Activated CD8-positive, alpha-beta T cell treated with anti-CD3 and anti-CD28 coated beads for 36 hours (primary cell): ENCODE measurements at regions of chr9 and their contacts with region 1.

Region 1: DNA sequence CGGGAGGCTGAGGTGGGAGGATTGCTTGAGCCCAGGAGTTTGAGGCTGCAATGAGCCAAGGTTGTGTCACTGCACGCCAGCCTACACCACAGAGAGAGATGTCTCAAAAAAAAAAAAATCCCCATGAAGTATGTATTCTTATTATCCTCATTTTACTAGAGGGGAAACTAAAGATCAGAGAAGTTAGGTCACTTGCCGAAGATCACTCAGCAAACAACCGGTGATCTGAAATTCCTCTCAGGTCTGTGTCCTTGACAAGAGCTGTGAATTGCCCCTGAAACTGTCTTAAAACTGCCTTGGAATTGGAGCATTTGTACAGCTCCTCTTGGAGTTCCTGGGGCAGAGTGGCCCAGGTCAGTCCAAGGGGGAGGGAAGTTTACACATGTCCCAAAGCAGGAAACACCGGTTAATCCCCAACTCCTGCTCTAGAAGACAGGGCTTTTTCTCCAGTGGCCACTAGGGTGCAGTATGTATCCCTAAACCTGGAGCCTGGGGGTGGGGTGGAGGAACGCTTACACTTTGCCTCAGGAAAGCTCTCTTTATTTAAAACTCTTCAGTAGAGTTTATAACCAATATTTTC is 27.6 kb downstream of the AQP7 start:
- DNase-seq: peak; percentile 84
- ATAC-seq: peak; percentile 97
- H3K4me3 Mint-ChIP-seq: no peak overlapping the region
- H3K27ac Mint-ChIP-seq: no peak overlapping the region
- H3K4me1 Mint-ChIP-seq: peaks cover 4% of the 10 kb centered on the region
- H3K27me3 Mint-ChIP-seq: no peaks in the 10 kb centered on the region
- CTCF ChIP-seq: peak; percentile 92

Region 2: GRCh38 chr9:33159760-33160127 is 215.0 kb before region 1 on chr9:
- CTCF ChIA-PET with region 1: no interaction called
- POLR2A ChIA-PET with region 1: no interaction called
- intact Hi-C with region 1: no loop called
- DNase-seq: peak; percentile 85
- ATAC-seq: peak; percentile 66
- H3K4me3 Mint-ChIP-seq: peak overlapping the region; percentile 54
- H3K27ac Mint-ChIP-seq: peak overlapping the region; percentile 90
- H3K4me1 Mint-ChIP-seq: peaks cover 93% of the 10 kb centered on the region
- H3K27me3 Mint-ChIP-seq: no peaks in the 10 kb centered on the region
- CTCF ChIP-seq: no peak

Region 3: GRCh38 chr9:33233681-33234473 is 140.8 kb before region 1 on chr9:
- CTCF ChIA-PET with region 1: no interaction called
- POLR2A ChIA-PET with region 1: no interaction called
- intact Hi-C with region 1: no loop called
- DNase-seq: peak; percentile 20
- ATAC-seq: no peak
- H3K4me3 Mint-ChIP-seq: no peak overlapping the region
- H3K27ac Mint-ChIP-seq: no peak overlapping the region
- H3K4me1 Mint-ChIP-seq: no peaks in the 10 kb centered on the region
- H3K27me3 Mint-ChIP-seq: no peaks in the 10 kb centered on the region
- CTCF ChIP-seq: no peak

Region 4: GRCh38 chr9:33249087-33249657 is 125.6 kb before region 1 on chr9:
- CTCF ChIA-PET with region 1: no interaction called
- POLR2A ChIA-PET with region 1: no interaction called
- intact Hi-C with region 1: no loop called
- DNase-seq: no peak
- ATAC-seq: no peak
- H3K4me3 Mint-ChIP-seq: no peak overlapping the region
- H3K27ac Mint-ChIP-seq: no peak overlapping the region
- H3K4me1 Mint-ChIP-seq: no peaks in the 10 kb centered on the region
- H3K27me3 Mint-ChIP-seq: no peaks in the 10 kb centered on the region
- CTCF ChIP-seq: no peak

Region 5: DNA sequence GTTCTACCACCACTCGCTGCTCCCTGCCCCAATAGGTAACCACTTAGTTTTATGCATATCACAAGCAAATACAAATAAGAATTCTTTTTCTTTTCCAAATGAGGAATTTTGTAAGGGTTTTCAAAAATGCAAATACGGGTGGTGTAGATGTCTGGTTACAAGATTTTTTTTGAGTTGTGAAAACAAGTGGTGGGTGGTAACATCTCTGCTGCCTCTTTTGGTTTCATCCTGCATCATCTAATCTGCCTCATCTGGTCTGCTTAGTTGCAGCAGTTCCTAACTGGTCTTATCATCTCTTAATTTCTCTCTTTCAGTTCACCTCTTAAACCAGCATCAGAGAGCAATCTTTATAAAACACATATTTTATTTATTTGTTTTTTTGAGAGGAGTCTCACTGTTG is 79.2 kb before region 1 on chr9:
- CTCF ChIA-PET with region 1: no interaction called
- POLR2A ChIA-PET with region 1: no interaction called
- intact Hi-C with region 1: no loop called
- DNase-seq: peak; percentile 14
- ATAC-seq: peak; percentile 45
- H3K4me3 Mint-ChIP-seq: peak overlapping the region; percentile 44
- H3K27ac Mint-ChIP-seq: peak overlapping the region; percentile 87
- H3K4me1 Mint-ChIP-seq: peaks cover 80% of the 10 kb centered on the region
- H3K27me3 Mint-ChIP-seq: no peaks in the 10 kb centered on the region
- CTCF ChIP-seq: no peak

Region 6: DNA sequence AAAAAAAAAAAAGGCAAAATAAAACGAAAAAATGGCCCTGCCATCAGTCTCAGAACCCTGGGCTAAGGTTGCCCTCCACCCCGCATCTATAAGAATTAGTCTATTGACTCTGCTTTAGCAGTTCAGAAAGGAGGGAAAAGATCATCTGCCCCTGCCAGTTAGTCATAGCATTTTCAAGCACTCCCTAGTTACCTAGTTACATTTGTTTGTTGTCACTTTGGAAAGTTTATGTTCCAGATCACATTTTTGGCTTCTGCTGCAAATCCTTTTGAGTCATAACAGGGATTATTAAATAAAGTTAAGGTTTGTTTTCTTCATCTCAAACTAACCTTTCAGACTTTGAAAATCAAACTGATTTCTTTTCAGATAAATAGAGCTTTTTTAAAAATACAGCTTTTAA is 24.4 kb before region 1 on chr9:
- CTCF ChIA-PET with region 1: interaction called, 14 read pairs
- POLR2A ChIA-PET with region 1: interaction called, 3 read pairs
- intact Hi-C with region 1: no loop called
- DNase-seq: no peak
- ATAC-seq: no peak
- H3K4me3 Mint-ChIP-seq: no peak overlapping the region
- H3K27ac Mint-ChIP-seq: no peak overlapping the region
- H3K4me1 Mint-ChIP-seq: peaks cover 2% of the 10 kb centered on the region
- H3K27me3 Mint-ChIP-seq: no peaks in the 10 kb centered on the region
- CTCF ChIP-seq: no peak

Region 7: DNA sequence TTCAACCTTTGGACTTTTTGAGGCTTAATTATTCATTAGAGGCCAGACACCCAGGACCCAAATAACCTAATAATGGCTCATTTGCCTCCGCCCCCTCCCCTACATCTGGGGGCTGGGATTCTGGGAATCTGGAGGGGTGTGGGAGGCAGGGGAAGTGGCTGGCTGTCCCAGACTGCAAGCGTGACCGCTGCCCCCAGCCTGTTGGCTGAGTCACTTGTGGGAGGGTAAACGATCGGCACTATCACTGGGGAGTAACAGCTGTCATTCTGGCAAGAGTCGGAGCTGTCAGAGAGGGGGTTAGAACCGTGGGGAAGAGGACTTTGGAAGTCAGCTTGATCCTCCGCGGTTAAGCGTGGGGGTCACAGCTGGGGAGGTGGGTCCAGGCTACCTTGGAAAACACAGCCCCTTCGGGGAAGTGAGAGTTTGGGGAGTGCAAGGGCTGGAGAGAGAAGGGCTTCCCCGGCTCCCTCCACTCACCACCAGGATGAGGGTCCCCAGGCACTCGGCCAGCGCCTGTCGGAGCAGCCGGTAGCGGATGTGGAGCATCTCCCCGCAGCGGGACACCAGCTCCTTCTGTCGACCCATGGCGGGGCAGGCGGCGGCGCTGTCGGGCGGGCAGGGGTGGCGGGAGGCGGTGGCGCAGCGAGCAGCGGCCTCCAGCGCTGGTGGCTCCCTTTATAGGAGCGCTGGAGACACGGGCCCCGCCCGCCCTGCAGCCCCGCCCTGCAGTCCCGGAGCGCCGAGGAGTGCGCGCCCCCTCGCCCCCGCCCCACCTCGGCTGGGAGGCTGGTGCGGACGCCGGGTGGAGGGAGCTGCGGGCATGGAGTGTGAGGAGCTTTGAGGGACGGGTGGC is 72.4 kb after region 1 on chr9 and contains the start of gene AQP3:
- CTCF ChIA-PET with region 1: interaction called, 23 read pairs
- POLR2A ChIA-PET with region 1: interaction called, 3 read pairs
- intact Hi-C with region 1: no loop called
- DNase-seq: peak; percentile 76
- ATAC-seq: peak; percentile 68
- H3K4me3 Mint-ChIP-seq: peak within 1 kb of the TSS; percentile 66
- H3K27ac Mint-ChIP-seq: peak within 1 kb of the TSS; percentile 88
- H3K4me1 Mint-ChIP-seq: peaks cover 39% of the 10 kb centered on the region
- H3K27me3 Mint-ChIP-seq: no peaks in the 10 kb centered on the region
- CTCF ChIP-seq: peak; percentile 39
- total RNA-seq, gene AQP3: 1.2 to 2.6 TPM

Region 8: GRCh38 chr9:33466565-33467495 is 92.1 kb after region 1 on chr9:
- CTCF ChIA-PET with region 1: interaction called, 63 read pairs
- POLR2A ChIA-PET with region 1: no interaction called
- intact Hi-C with region 1: no loop called
- DNase-seq: peak; percentile 82
- ATAC-seq: peak; percentile 91
- H3K4me3 Mint-ChIP-seq: no peak overlapping the region
- H3K27ac Mint-ChIP-seq: no peak overlapping the region
- H3K4me1 Mint-ChIP-seq: peaks cover 10% of the 10 kb centered on the region
- H3K27me3 Mint-ChIP-seq: no peaks in the 10 kb centered on the region
- CTCF ChIP-seq: peak; percentile 97